ENCODE measurements at regions of chr11 and their contacts with region 1.

Region 1: DNA sequence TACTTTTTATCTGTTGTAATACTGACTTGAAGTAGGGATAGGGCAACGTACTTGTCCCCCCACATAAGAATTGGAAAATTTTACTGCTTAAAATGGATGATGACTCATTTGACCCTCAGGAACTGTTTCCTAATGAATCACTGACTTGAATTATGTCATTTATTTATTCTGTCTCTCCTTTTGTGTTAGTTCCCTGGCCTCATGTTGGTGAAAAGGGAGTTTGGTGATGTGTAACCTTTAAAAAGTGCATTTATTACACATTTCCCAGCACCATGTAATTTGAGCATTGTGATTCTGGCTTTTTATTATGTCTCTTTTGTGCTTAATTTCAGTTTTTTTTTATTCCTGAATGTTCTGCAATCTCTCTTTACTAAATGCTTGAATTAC is 20.3 kb upstream of the PGM2L1 start:
- DNase-seq: peak; percentile 72
- ATAC-seq: peak; percentile 52; the same call in 1 of the 2 replicates
- H3K4me3 ChIP-seq: no peak overlapping the region
- H3K27ac ChIP-seq: no peak overlapping the region
- H3K4me1 ChIP-seq: peaks cover 7% of the 10 kb centered on the region; the same call in 1 of the 2 replicates
- H3K27me3 ChIP-seq: no peaks in the 10 kb centered on the region
- CTCF ChIP-seq: no peak

Region 2: DNA sequence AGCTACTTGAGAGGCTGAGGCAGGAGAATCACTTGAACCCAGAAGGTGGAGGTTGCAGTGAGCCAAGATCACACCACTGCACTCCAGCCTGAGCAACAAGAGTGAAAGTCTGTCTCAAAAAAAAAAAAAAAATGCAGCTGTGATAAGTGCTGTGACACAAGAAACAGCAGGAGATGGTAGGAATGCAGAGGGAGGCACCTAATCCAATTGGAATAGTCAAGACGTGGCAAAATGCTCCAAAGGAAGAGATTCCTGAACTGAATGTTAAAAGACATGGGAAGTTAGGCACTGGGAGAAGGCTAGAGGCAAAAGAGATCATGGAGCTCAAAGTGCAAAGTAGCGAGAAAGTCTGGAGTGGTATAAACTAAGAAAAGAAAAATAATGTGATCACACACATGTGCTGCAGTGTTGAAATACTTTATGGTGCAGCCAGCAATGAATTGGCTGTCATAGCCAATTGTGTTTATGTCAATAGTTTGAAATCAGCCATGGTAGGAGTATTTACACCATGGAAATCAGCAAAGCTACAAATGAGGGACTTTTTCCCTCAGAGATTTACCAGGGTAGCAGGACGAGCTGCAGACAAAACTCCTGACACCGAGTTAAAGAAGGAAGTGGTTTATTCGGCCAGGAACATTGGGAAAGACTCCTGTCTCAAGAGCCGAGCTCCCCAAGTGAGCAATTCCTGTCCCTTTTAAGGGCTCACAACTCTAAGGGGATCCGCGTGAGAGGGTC is 115.9 kb after region 1 on chr11:
- CTCF ChIA-PET with region 1: no interaction called
- POLR2A ChIA-PET with region 1: interaction called, 13 read pairs
- in situ Hi-C with region 1: no loop called
- intact Hi-C with region 1: no loop called
- DNase-seq: no peak
- ATAC-seq: no peak
- H3K4me3 ChIP-seq: no peak overlapping the region
- H3K27ac ChIP-seq: no peak overlapping the region
- H3K4me1 ChIP-seq: no peaks in the 10 kb centered on the region
- H3K27me3 ChIP-seq: no peaks in the 10 kb centered on the region
- CTCF ChIP-seq: no peak

Region 3: DNA sequence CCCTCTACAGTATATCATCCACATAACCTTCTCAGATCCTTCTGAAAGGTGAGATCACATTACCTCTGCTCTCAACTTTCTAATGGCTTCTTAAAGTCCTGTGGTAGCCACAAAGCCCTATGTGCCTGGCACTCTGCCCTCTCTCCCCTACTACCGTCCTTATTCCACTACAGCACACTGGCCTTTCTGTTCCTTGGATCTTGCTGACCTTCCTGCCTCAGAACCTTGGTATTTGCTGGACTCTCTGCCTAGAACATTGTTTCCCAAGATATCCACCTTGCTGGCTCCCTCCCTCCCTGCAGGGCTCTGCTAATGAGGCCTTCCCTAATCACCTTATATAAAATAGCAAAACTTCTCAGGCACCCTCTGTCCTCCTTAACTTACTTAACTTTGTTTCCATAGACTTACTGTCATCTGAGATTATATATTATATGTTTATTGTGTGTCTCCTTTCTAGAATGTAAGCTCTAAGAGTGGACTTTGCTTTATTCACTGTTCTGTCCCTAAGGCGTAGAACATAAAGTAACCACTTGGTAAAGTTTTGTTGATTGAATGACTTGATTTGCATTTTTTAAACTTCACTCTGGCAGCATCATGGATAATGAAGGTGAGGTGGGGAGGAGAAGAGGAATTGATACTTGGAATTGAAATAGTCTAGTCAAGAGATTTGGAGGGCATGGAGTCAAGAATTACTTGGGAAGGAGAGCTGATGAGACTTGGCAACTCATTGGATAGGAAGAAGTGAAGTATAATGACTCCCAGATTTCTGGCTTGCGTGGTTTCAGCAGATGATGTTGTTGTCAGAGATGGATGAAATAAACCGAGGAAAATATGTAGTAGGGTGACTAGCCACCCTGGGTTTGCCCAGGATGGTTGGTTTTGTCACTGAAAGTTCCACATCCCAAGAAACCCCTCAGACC is 184.4 kb after region 1 on chr11:
- CTCF ChIA-PET with region 1: no interaction called
- POLR2A ChIA-PET with region 1: no interaction called
- in situ Hi-C with region 1: no loop called
- intact Hi-C with region 1: no loop called
- DNase-seq: no peak
- ATAC-seq: no peak
- H3K4me3 ChIP-seq: no peak overlapping the region
- H3K27ac ChIP-seq: no peak overlapping the region
- H3K4me1 ChIP-seq: no peaks in the 10 kb centered on the region
- H3K27me3 ChIP-seq: no peaks in the 10 kb centered on the region
- CTCF ChIP-seq: no peak

Measured in Panc1 (cell line).